ENCODE measurements at regions of chr10 and their contacts with region 1.

Region 1: DNA sequence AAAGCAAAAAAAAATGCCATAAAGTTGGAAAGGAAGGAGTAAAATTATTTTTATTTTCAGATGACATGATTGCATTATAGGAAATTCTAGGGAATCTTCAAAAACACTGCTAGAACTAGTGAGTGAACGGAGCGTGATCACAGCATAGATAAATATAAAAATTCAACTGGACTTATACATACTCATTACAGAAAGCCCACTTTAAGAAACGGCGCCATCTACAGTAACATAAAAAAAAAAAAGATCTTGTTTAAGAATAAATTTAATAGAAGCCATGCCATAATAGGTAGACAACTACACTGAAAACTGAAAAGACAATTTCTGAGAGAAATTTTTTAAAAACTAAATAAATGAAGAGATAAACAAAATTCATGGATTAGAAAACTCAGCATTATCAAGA is 623.1 kb upstream of the MGMT start:
- DNase-seq: peak; percentile 58
- H3K4me3 ChIP-seq: no peak overlapping the region
- H3K27ac ChIP-seq: no peak overlapping the region
- H3K4me1 ChIP-seq: peaks cover 6% of the 10 kb centered on the region
- H3K27me3 ChIP-seq: no peaks in the 10 kb centered on the region
- CTCF ChIP-seq: peak; percentile 61

Region 2: DNA sequence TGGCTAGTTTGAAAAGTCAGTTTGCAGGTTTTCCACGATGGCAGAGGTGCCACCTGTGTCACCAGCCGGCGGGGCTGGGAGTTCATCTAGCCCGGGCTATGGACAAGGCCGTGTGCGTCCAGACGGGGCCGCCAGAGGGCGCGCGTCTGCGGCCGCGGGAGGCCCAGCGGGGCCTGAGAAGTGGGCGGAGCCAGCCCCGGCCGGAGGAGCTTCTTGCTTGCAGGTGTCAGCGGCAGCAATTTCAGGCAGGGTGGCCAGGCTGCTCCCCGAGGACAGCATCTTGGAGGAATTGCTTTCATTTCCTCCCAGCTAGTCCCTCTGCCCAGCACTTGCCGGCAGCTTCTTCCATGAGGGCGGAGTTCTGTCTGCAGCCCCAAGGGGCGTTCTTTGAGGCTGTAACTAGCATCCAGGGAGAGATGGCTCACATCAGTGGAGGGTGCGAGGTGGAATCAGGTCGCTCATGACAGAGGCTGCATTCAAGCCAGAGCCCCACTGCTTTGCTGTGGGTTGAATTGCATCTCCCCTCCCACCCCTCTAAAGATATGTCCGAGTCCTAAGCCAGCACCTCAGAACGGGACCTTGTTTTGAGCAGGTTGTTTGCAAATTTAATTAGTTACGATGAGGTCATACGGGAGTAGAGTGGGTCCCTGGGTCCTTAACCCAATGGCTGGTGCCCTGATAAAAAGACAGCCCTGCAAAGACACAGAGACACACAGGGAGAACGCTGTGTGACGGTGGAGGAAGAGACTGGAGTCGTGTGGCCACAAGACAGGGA is 631.8 kb before region 1 on chr10:
- CTCF ChIA-PET with region 1: no interaction called
- POLR2A ChIA-PET with region 1: no interaction called
- intact Hi-C with region 1: no loop called
- DNase-seq: peak; percentile 83
- H3K4me3 ChIP-seq: peak overlapping the region; percentile 3
- H3K27ac ChIP-seq: no peak overlapping the region
- H3K4me1 ChIP-seq: no peaks in the 10 kb centered on the region
- H3K27me3 ChIP-seq: no peaks in the 10 kb centered on the region
- CTCF ChIP-seq: peak; percentile 98

Region 3: GRCh38 chr10:128540781-128541761 is 302.9 kb before region 1 on chr10:
- CTCF ChIA-PET with region 1: no interaction called
- POLR2A ChIA-PET with region 1: no interaction called
- intact Hi-C with region 1: loop called (anchors 10 kb)
- DNase-seq: peak; percentile 53
- H3K4me3 ChIP-seq: peak overlapping the region; percentile 32
- H3K27ac ChIP-seq: no peak overlapping the region
- H3K4me1 ChIP-seq: peaks cover 35% of the 10 kb centered on the region
- H3K27me3 ChIP-seq: peaks cover 8% of the 10 kb centered on the region
- CTCF ChIP-seq: peak; percentile 65

Region 4: GRCh38 chr10:128776673-128777252 is 67.2 kb before region 1 on chr10:
- CTCF ChIA-PET with region 1: no interaction called
- POLR2A ChIA-PET with region 1: no interaction called
- intact Hi-C with region 1: no loop called
- DNase-seq: no peak
- H3K4me3 ChIP-seq: no peak overlapping the region
- H3K27ac ChIP-seq: no peak overlapping the region
- H3K4me1 ChIP-seq: no peaks in the 10 kb centered on the region
- H3K27me3 ChIP-seq: no peaks in the 10 kb centered on the region
- CTCF ChIP-seq: no peak

Region 5: DNA sequence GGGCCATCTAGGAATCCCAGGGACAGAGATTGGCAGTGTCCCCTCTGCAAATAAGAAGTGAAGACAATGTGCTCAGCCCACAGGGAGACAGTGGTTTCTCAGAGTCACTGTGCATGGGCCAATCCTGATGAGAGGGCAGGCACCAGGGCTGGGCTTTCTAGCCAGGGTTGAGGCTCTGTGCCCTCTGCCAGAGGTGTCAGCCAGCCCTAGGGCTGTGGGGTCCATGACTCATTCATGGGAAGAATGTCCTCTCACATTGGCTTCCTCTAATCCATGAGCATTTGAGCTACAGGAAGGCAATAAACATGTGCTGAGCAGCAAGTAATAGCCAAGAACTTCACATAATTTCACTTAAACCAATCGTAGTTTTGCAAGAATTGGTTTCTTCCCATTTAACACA is 141.1 kb after region 1 on chr10:
- CTCF ChIA-PET with region 1: no interaction called
- POLR2A ChIA-PET with region 1: no interaction called
- intact Hi-C with region 1: no loop called
- DNase-seq: no peak
- H3K4me3 ChIP-seq: no peak overlapping the region
- H3K27ac ChIP-seq: no peak overlapping the region
- H3K4me1 ChIP-seq: no peaks in the 10 kb centered on the region
- H3K27me3 ChIP-seq: no peaks in the 10 kb centered on the region
- CTCF ChIP-seq: no peak